Caco-2 (cell line): ENCODE measurements at regions of chr11 and their contacts with region 1.

Region 1: DNA sequence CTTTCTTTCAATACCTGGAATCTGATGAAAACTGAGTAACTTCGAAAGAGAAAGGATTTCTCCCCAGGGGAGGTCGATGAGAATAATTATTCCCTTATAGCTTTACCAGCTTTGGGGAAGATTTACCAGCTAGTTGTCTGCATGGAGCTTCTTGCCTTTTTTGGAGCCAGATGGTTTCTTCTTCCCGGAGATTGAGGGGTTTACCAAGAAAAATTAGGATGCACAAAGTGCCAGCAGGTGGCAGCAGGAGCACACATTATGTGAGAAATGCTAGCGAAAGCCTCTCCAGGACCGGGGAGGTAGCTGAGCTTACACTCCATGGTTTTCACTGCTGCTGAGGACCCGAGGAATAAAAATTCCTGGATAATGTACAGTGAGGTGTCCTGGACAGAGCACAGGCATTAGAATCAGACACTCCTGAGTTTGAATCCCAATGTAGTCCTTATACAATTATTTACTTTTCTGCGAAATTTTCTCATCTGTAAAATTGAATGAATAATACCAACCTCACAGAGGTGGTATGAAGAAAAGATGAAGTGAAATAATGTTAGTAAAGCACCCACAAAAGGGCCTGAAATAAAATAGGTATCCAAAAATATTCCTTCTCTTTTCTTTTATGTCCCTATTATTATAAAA is 46.0 kb upstream of the PARVA start:
- DNase-seq: peak; percentile 83
- H3K4me3 ChIP-seq: no peak overlapping the region
- H3K4me3 Mint-ChIP-seq: no peak overlapping the region
- H3K27ac Mint-ChIP-seq: no peak overlapping the region
- H3K4me1 ChIP-seq: no peaks in the 10 kb centered on the region
- H3K4me1 Mint-ChIP-seq: peaks cover 6% of the 10 kb centered on the region
- H3K27me3 ChIP-seq: 0 out of 2 replicates have a peak, but pooled peaks cover 1% of the 10 kb centered on the region
- H3K27me3 Mint-ChIP-seq: no peaks in the 10 kb centered on the region
- CTCF ChIP-seq: peak; percentile 76 to 81

Region 2: DNA sequence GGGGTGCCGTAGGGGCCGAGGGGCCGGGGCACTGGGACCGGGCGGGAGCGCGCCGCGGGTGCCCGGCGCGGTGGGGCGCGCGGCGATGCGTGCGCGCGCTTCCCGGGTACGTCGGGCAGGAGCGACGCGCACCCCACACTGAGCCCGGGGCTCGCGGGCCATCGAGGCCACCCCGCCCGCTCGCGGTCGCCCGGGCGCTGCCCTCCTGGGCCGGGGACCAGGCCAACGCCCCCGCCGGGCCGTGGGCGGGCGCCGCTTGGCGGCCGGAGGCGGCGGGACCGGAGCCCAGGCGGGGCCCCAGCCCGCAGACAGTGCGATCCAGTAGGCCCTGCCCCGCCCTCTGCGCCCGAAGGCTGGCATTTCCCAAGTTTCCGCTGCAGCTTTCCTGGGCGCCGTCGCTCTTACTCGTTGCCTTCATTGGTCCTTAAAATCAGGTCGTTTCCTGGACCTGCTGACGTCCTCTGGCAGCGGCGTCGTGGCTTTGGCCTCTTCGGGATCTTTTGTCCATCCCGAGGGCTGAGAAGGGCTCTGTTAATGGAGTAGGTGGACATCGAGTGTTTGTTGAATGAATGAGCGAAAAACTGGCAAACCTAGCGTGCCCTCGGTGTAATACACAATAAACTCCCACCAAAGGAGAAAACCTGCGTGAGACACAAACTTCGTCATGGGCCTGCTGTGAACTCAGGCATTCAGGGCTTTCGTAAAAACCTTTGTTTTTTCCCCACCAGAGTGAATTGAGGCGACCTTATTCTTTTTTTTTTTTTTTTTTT is 46.7 kb after region 1 on chr11:
- CTCF ChIA-PET with region 1: interaction called, 13 read pairs
- POLR2A ChIA-PET with region 1: no interaction called
- intact Hi-C with region 1: loop called (anchors 1 kb)
- DNase-seq: peak; percentile 78 to 87
- H3K4me3 ChIP-seq: peak overlapping the region; percentile 90
- H3K4me3 Mint-ChIP-seq: peak overlapping the region; percentile 85
- H3K27ac Mint-ChIP-seq: peak overlapping the region; percentile 88
- H3K4me1 ChIP-seq: peaks cover 10% of the 10 kb centered on the region
- H3K4me1 Mint-ChIP-seq: peaks cover 8% of the 10 kb centered on the region
- H3K27me3 ChIP-seq: no peaks in the 10 kb centered on the region
- H3K27me3 Mint-ChIP-seq: no peaks in the 10 kb centered on the region
- CTCF ChIP-seq: no peak

Region 3: DNA sequence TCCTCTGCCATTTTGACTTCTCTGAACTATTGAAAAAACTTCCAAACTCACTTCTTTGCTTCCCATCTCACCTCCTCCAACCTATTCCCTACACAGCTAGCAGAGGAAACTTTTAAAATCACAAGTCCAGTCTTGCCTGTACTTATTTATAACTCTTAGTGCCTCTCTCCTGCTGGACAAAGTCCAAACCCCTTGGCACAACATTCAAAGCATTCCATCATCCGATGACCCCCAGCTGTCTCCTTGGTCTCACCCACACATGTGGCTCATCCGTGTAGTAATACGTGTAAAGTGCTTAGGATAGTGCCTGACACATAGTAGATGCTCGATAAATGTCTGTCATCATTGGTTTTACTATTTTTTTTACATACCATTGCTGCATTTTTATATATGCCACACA is 147.4 kb after region 1 on chr11:
- CTCF ChIA-PET with region 1: no interaction called
- POLR2A ChIA-PET with region 1: no interaction called
- intact Hi-C with region 1: loop called (anchors 5 kb)
- DNase-seq: no peak
- H3K4me3 ChIP-seq: no peak overlapping the region
- H3K4me3 Mint-ChIP-seq: no peak overlapping the region
- H3K27ac Mint-ChIP-seq: no peak overlapping the region
- H3K4me1 ChIP-seq: no peaks in the 10 kb centered on the region
- H3K4me1 Mint-ChIP-seq: peaks cover 7% of the 10 kb centered on the region
- H3K27me3 ChIP-seq: no peaks in the 10 kb centered on the region
- H3K27me3 Mint-ChIP-seq: no peaks in the 10 kb centered on the region
- CTCF ChIP-seq: no peak

Region 4: GRCh38 chr11:12784987-12785386 is 453.6 kb after region 1 on chr11:
- CTCF ChIA-PET with region 1: no interaction called
- POLR2A ChIA-PET with region 1: no interaction called
- intact Hi-C with region 1: loop called (anchors 1 kb)
- DNase-seq: no peak
- H3K4me3 ChIP-seq: no peak overlapping the region
- H3K4me3 Mint-ChIP-seq: no peak overlapping the region
- H3K27ac Mint-ChIP-seq: peak overlapping the region; percentile 3
- H3K4me1 ChIP-seq: peaks cover 4% of the 10 kb centered on the region; the same call in 1 of the 2 replicates
- H3K4me1 Mint-ChIP-seq: peaks cover 16% of the 10 kb centered on the region
- H3K27me3 ChIP-seq: no peaks in the 10 kb centered on the region
- H3K27me3 Mint-ChIP-seq: no peaks in the 10 kb centered on the region
- CTCF ChIP-seq: no peak

Region 5: DNA sequence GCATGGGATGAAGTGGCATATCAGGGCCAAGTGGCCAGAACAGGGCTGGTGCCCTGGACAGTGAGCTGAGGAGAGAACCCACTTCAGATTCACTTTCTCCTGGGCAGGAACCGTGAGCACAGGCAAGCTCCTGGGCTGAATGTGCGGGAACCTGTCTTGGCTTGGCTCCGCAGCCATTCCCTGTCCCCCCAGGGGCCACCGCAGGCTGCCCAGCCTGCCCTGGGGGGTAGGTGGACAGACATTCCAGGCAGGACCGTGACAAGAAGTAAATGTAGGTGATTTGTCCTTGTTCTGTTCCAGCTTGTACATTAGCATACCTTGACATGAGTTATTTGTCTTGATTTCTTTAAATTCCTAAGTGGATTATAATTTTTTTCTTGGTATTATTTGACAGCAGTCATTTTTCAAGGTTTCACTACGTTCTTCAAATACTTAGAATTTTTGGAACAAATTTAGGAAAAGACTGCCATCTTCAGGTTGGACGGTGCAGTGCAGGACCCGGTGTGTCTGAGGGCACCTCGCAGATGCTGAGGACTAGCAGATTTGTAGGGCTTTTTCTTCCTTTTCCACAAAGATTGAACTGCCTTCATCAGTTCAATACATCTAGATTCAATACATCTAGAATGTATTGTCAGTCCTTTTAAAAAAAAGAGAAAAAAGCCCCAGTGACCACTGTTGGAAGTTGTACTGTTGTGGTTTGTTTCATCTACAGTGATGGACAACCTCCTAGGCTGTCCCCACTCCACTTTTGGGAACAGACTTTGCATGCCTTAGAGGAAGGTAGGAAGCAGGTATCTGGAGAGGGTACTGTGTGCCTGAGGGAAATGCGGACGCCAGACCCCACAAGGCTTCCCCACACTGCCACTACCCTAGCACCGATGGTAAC is 562.7 kb after region 1 on chr11:
- CTCF ChIA-PET with region 1: interaction called, 18 read pairs
- POLR2A ChIA-PET with region 1: no interaction called
- intact Hi-C with region 1: loop called (anchors 1 kb)
- DNase-seq: peak; percentile 61 to 81
- H3K4me3 ChIP-seq: no peak overlapping the region
- H3K4me3 Mint-ChIP-seq: no peak overlapping the region
- H3K27ac Mint-ChIP-seq: peak overlapping the region; percentile 57
- H3K4me1 ChIP-seq: peaks cover 10% of the 10 kb centered on the region
- H3K4me1 Mint-ChIP-seq: peaks cover 4% of the 10 kb centered on the region
- H3K27me3 ChIP-seq: no peaks in the 10 kb centered on the region
- H3K27me3 Mint-ChIP-seq: no peaks in the 10 kb centered on the region
- CTCF ChIP-seq: peak; percentile 79 to 84

Region 6: DNA sequence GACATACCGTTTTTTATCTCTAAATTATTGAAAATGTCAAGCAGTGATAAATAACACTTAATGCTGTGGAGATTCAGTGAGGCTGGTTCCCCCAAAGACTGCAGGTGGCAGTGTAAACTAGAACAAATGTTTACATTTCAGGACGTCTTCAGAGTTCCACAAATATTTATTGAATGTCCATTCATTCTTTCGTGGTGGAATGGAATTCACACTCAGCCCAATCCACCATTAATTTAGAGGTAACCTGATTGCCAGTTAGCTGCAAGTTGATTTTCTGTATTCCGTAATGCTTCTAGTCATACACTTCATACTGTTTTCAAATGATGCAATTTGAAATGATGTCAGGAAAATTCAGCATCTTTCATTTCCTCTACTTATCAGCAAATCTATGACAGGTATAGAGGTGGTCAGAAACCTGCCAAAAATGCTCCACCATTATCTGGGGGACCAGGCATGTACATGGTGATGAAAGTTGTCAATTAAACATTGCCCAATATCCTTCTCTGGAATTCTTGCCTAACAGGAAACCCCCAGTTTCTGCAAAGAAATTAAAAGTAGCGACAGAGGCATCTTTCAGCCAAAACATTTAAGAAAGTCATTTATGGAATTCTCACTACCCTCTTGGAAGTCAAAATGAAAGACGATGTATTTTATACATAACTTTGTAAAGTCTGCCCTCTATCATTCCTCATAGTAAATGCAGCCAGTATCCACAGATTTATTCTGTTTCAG is 851.9 kb after region 1 on chr11:
- CTCF ChIA-PET with region 1: no interaction called
- POLR2A ChIA-PET with region 1: no interaction called
- intact Hi-C with region 1: loop called (anchors 10 kb)
- DNase-seq: peak in 1 of 2 experiments; percentile 22
- H3K4me3 ChIP-seq: no peak overlapping the region
- H3K4me3 Mint-ChIP-seq: peak overlapping the region; percentile 10
- H3K27ac Mint-ChIP-seq: no peak overlapping the region
- H3K4me1 ChIP-seq: peaks cover 6% of the 10 kb centered on the region
- H3K4me1 Mint-ChIP-seq: no peaks in the 10 kb centered on the region
- H3K27me3 ChIP-seq: no peaks in the 10 kb centered on the region
- H3K27me3 Mint-ChIP-seq: peaks cover 2% of the 10 kb centered on the region
- CTCF ChIP-seq: peak; percentile 41 to 53